ENCODE measurements at regions of chr7 and their contacts with region 1.

Region 1: DNA sequence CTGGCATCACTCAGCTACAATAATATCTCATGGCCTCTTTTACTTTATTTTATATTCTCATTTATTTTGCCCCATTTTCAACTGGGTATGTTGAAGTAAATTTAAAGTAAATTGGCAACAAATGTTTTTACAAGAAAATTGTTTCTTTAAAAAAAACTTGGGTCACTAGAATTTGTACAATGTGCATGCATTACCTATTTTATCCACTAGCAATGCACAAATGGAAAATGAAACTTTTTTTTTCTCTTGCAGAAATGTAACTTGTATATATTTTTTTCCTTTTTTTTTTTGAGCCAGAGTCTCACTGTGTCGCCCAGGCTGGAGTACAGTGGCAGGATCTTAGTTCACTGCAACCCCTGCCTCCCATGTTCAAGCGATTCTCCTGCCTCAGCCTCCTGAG is 10.3 kb upstream of the H2AZ2 start:
- DNase-seq: no peak
- ATAC-seq: no peak

Region 2: GRCh38 chr7:44921607-44922359 is 63.6 kb after region 1 on chr7:
- intact Hi-C with region 1: loop called (anchors 5 kb)
- DNase-seq: peak; percentile 96
- ATAC-seq: peak; percentile 97

Region 3: DNA sequence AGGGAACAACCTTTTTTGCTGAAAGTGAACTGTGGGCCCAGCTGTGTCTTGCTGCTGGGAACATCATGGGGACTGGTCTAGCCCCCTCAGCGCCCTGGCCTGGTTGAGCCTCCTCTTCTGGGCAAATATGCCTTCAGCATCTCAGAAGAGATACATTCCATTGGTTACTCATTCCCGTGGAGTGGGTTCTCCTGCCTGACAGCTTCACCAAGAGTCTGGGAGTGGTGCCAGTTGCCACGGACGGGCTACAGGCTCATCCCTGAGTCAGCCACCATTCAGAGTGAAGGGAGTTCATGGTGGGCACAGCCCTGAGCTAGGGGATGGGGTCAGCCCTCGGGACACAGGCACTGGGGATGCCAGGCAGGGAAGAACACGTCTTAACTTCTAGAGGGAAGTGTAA is 381.3 kb after region 1 on chr7:
- intact Hi-C with region 1: no loop called
- DNase-seq: no peak
- ATAC-seq: no peak

Region 4: DNA sequence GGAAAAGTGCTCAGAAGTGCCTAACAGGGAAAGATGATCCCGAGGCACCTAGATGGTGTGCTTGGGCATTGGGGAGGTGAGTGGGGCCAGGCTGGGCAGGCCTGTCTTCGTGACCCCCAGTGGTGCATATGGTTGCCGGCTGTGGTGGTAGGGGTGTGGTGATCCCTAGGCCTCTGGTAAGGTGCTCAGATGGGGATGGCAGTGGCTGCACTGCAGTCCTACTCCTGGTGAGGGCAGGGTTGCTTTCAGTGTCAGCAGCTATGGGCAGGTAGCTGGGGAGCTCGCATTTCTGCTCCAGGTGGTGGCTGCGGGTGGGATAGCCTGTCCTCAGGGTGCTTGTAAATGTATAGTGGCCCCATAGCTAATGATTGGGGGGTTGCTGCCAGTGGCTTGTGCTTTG is 453.4 kb after region 1 on chr7:
- intact Hi-C with region 1: no loop called
- DNase-seq: no peak
- ATAC-seq: no peak

Measured in Right ventricle myocardium superior (tissue), 1 donor.